Left ventricle myocardium superior (tissue), 1 donor: ENCODE measurements at regions of chr7 and their contacts with region 1.

Region 1: GRCh38 chr7:128425850-128426249 is 16.1 kb upstream of the IMPDH1 start:
- DNase-seq: peak; percentile 70
- ATAC-seq: peak; percentile 56

Region 2: GRCh38 chr7:128459394-128459878 is 33.6 kb after region 1 on chr7:
- intact Hi-C with region 1: loop called (anchors 1 kb)
- DNase-seq: peak; percentile 54
- ATAC-seq: peak; percentile 12